OCI-LY7 (cell line): ENCODE measurements at regions of chrX and their contacts with region 1.

Region 1: DNA sequence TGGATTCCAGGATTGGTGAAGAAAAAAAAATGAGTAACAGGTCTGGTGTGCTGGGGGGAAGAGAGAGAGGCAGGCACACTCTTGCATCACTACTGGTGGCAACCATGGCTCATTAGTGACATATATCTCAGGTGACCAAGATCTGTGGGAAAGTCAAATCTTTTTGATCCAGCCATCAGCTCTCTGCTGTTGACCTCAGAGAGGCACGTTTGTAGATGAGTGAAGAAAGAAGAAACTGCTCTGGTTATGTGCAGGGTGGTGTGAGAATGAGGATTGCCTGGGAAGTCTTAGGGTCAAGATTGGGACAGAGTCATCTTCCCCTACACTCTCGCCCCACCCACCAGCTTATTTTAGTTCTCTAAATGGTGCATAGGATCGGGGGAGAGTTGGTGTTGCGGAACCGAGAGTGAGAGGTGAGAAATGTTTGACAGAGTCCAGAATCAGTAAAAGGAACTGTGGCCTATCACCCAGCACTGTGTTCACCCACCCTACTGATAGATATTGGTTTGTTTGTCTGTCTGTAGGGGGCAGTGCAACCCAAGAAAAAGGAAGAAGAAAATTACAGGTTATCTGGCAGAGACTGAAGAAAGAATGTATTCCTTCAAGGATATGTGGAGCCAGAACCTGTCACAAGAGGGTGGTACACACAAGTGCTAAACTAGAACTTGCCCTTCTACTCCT is 21.9 kb downstream of the ARMCX6 start:
- DNase-seq: peak; percentile 53
- H3K4me3 ChIP-seq: no peak overlapping the region
- H3K27ac ChIP-seq: no peak overlapping the region
- H3K4me1 ChIP-seq: no peaks in the 10 kb centered on the region
- CTCF ChIP-seq: peak; percentile 82

Region 2: DNA sequence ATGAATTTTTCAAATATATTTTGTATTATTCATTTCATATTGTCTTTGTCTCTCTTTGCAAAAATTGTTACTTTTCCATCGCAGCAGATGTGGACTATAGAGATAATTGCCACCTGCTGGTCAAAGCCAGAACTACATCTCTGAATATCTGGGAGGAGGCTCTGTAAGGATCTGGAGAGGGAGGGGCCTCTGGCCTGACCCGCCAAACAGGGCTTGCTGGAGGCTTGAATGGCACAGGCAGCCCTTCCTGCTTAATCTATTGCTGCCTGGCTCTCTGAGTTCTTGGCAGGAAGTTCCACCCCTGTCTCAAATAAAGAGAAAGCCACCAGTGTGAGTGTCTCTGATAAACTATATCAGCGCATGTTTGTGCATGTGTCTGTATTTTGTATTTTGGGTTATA is 203.5 kb after region 1 on chrX:
- CTCF ChIA-PET with region 1: no interaction called
- POLR2A ChIA-PET with region 1: no interaction called
- intact Hi-C with region 1: loop called (anchors 5 kb)
- DNase-seq: peak; percentile 79
- H3K4me3 ChIP-seq: no peak overlapping the region
- H3K27ac ChIP-seq: no peak overlapping the region
- H3K4me1 ChIP-seq: no peaks in the 10 kb centered on the region
- CTCF ChIP-seq: peak; percentile 75